Prostate gland (tissue), 2 donors: ENCODE measurements at regions of chr14 and their contacts with region 1.

Region 1: GRCh38 chr14:73662487-73662943 is 17.7 kb downstream of the DNAL1 start:
- DNase-seq: peak; percentile 11
- H3K4me3 ChIP-seq: no peak overlapping the region
- H3K27ac ChIP-seq: peak overlapping the region in 1 of 2 donors; percentile 16
- H3K4me1 ChIP-seq: peaks cover 4% of the 10 kb centered on the region
- H3K27me3 ChIP-seq: no peaks in the 10 kb centered on the region
- CTCF ChIP-seq: peak in 3 of 4 experiments; percentile 12 to 36 (median 16)
- POLR2A ChIP-seq: no peak

Region 2: DNA sequence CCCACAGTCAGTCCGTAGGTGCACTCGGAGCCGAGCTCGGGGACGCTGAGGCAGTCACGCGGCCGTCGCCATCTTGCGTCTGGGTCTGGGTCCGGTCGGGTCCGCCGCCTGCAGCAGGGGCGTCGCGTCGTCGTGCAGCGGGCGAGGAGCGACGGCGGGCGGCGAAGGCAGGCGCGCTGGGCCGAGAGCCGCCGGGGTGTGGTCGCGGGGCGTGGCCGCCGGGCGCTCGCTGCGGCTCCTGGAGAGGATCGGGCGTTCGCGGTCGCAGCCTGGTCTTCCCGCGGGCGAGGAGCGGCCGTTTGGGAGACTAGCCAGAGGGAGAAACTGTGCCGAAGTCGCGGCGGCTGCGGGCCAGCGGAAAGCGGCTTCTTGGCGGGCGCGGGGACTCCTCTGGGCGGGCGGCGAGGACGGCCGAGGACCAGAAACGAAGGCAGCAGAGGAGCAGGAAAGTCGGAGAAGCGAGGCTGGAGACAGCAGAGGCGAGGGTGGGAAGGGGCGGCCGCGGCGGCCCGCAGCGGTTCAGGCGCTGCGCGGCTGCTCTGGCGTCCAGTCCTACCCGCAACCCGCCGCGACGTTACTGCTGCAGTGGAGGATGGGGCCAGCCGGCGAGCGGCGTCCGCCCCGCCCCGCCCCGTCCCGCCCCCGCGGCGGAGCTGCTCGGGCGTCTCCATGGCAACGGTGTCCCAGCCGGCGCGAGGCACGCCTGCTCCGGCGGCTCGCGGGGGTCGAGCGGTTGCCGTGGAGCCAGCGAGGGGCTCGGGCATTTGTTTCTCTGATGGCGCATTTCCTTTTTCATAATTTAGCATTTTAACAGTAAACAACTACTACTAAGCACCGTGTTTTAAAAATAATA is 51.5 kb after region 1 on chr14 and contains the start of gene PNMA1:
- intact Hi-C with region 1: loop called (anchors 5 kb)
- DNase-seq: peak; percentile 84
- H3K4me3 ChIP-seq: peak within 1 kb of the TSS; percentile 77
- H3K27ac ChIP-seq: peak within 1 kb of the TSS; percentile 87 to 91
- H3K4me1 ChIP-seq: peaks cover 11% of the 10 kb centered on the region
- H3K27me3 ChIP-seq: no peaks in the 10 kb centered on the region
- CTCF ChIP-seq: no peak
- POLR2A ChIP-seq: peak; percentile 82
- total RNA-seq, gene PNMA1: 18.6 to 62.7 TPM